ENCODE measurements at regions of chr17 and their contacts with region 1.

Region 1: DNA sequence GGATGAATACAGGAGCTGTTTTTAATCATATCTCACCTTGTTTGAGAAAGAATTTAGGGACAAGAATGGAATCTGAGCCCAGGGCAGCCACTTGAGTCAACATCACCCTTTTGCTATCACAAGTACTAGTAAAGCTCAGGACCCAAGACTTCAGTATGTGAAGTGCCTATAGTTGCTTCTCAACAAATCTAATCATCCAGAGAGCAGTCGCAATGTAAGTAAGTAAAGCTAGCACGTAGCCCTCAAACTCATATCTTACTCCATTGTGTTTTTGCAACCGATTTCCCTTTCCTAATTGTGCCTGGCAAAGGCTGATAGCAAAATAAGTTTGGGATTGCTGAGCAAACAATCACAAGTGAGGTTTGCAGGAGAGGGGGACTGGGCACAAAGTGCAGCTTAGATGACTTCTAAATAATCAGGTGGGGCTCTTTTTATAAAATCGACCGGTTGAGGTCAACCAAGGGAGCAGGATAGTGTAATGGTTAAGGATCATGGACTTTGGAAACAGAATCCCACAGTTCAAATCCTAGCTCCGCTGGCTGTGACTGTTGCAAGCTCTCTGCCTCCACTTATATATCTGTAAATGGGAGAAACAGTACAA is 13.0 kb downstream of the TOB1 start:
- DNase-seq: no peak
- ATAC-seq: no peak
- H3K4me3 ChIP-seq: no peak overlapping the region
- H3K27ac ChIP-seq: peak overlapping the region in 1 of 2 experiments; percentile 80; a peak in 2 of 6 replicates
- H3K4me1 ChIP-seq: peaks cover 25% of the 10 kb centered on the region
- CTCF ChIP-seq: no peak
- EP300 ChIP-seq: no peak
- POLR2A ChIP-seq: no peak
- RAD21 ChIP-seq: no peak

Region 2: DNA sequence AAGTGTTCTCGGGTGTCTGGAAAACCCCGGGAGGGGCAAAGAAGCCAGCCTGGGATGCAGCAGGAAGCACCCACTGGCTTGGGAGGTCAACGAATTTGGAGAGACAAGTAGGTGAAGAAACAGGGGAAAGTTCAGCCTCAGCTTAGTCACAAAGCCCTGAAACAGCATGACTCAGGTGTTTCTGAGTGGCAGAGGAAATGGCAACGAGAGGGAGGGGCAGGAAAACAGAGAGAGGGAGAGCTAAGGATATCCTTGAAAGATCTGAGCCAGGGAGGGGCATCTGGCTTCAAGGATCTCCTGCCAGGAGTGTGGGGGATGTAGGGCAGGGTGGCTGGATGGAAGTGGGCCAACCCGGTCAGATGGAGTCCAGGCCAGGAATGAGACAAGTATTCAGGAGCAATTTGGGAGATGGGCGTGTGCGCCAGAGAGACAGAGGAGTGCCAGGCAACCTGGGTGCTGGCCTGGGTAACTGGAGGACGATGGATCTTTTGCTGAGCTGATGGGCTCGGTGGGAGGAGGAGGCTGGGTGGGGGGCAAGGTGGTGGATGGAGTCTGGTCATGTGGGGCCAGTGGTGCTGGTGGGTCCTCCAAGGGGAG is 191.2 kb before region 1 on chr17:
- CTCF ChIA-PET with region 1: no interaction called
- POLR2A ChIA-PET with region 1: no interaction called
- DNase-seq: peak; percentile 100
- ATAC-seq: peak; percentile 61 to 75
- H3K4me3 ChIP-seq: 0 out of 3 replicates have a peak overlapping the region, but pooled peaks have one; percentile 8
- H3K27ac ChIP-seq: peak overlapping the region; percentile 98
- H3K4me1 ChIP-seq: peaks cover 97% of the 10 kb centered on the region
- CTCF ChIP-seq: no peak
- EP300 ChIP-seq: peak; percentile 96 to 98
- POLR2A ChIP-seq: no peak
- RAD21 ChIP-seq: peak; percentile 21 to 65; a peak in 4 of 5 replicates

Region 3: GRCh38 chr17:50816771-50817751 is 36.1 kb before region 1 on chr17:
- CTCF ChIA-PET with region 1: interaction called, 162 read pairs
- POLR2A ChIA-PET with region 1: no interaction called
- DNase-seq: peak; percentile 43 to 75
- ATAC-seq: peak; percentile 80 to 87
- H3K4me3 ChIP-seq: no peak overlapping the region
- H3K27ac ChIP-seq: peak overlapping the region in 1 of 2 experiments; percentile 7; a peak in 1 of 6 replicates
- H3K4me1 ChIP-seq: peaks cover 8% of the 10 kb centered on the region
- CTCF ChIP-seq: peak; percentile 91
- EP300 ChIP-seq: no peak
- POLR2A ChIP-seq: no peak
- RAD21 ChIP-seq: peak; percentile 49 to 52

Region 4: GRCh38 chr17:50865984-50866774 is 13.1 kb after region 1 on chr17 and contains the start of gene TOB1:
- CTCF ChIA-PET with region 1: interaction called, 197 read pairs
- POLR2A ChIA-PET with region 1: interaction called, 58 read pairs
- DNase-seq: peak; percentile 90 to 98
- ATAC-seq: peak; percentile 72 to 86
- H3K4me3 ChIP-seq: peak within 1 kb of the TSS; percentile 92
- H3K27ac ChIP-seq: peak within 1 kb of the TSS; percentile 97 to 98
- H3K4me1 ChIP-seq: peaks cover 36% of the 10 kb centered on the region
- CTCF ChIP-seq: no peak
- EP300 ChIP-seq: 0 out of 5 replicates have a peak, but pooled peaks of 1 of the 2 experiments have one; percentile 36
- POLR2A ChIP-seq: peak; percentile 100
- RAD21 ChIP-seq: peak; percentile 7 to 8; a peak in 3 of 5 replicates
- polyA plus RNA-seq, gene TOB1: 101 and 133 TPM in 2 replicates

Region 5: DNA sequence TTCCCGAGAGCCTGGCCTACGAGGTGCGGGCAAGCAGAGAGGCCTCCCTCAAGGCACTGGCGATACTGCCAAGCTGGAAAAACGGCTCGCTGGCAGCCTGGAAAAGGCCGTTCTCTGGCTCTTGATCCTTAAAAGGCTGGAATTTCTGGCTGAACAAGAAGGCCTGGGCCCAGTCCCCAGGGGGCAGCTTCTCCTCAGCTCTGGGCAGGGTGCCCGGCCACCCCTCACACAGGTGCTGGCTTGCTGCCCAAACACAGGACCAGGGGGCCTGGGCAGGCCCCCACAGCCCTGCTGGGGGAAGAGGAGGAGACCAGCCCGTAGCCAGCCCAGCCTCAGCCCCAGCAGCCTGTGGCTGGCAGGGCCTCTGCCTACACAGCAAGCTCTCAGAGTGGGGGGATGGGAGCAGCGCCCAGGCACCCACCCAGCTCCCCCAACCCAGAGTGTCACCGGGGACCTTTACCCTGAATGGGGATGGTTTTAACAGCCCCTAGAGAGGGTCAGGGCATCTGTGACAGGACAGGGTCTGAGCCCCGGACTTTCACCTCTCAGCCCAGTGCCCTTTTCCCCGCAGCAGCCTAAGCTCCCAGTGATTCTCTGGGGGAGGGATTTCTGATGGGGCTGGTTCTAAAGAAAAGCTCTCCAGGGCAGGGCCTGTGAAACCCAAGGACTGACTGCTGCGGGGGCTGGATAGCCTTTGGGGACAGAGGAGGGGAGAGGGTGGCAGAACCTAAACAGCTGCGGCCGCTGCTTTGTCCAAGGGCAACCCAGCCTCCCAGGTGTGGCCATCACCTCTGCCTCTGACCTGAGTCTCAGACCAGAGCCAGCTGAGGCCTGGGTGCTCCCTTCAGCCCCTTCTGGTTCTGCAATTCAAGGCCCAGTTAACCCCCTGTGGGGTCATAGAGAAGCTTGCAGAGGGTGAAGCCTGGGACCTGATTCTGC is 51.7 kb after region 1 on chr17:
- CTCF ChIA-PET with region 1: interaction called, 12 read pairs
- POLR2A ChIA-PET with region 1: no interaction called
- DNase-seq: no peak
- ATAC-seq: peak; percentile 33 to 58; a peak in 5 of 6 replicates
- H3K4me3 ChIP-seq: no peak overlapping the region
- H3K27ac ChIP-seq: peak overlapping the region; percentile 67 to 88
- H3K4me1 ChIP-seq: peaks cover 33% of the 10 kb centered on the region
- CTCF ChIP-seq: no peak
- EP300 ChIP-seq: no peak
- POLR2A ChIP-seq: no peak
- RAD21 ChIP-seq: no peak

Region 6: DNA sequence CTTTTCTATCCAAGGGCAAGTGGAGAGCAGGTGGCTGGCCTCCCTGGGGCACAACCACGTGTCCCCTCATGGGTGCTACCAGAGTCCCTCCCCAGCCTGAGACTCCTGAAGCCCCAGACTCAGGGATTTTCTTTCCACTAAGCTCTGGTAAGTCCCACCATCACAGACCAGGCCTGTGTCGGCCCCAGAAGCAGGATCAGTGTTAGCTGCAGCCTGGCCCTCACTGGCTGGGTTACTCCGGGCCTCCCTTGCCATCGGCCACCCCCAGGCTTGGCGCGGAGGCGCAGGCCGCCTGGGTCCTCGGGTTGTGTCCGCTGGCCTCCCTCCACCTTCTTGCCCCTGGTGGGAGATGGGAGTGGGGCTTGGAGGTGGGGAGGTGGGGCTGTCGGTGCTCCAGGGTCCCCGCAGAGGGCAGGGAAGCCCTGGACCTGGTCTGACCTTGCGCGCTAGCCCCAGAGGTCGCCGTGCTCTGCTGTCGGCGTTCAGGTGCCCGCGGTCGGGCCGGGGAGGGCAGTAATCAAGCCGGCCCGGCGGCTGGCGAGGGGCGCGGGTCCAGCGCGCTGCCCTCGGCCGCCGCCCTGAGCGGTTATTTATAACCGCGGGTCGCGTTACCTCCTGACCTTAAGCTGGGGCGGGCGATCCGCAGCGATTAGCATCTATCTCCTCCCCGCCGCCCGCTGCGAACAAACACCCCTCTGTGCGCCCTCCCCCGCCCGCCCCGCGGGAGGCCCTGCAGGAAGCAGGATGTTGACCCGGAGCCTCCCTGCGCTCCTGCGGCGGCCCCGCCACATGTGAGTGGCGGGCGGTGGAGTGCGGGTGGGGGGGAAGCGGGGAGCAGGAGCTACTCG is 91.2 kb after region 1 on chr17:
- CTCF ChIA-PET with region 1: interaction called, 1,502 read pairs
- POLR2A ChIA-PET with region 1: interaction called, 27 read pairs
- DNase-seq: peak; percentile 94 to 97
- ATAC-seq: peak; percentile 79 to 83
- H3K4me3 ChIP-seq: peak overlapping the region; percentile 53
- H3K27ac ChIP-seq: peak overlapping the region; percentile 96 to 98
- H3K4me1 ChIP-seq: peaks cover 78% of the 10 kb centered on the region
- CTCF ChIP-seq: no peak
- EP300 ChIP-seq: peak; percentile 88 to 97; a peak in 3 of 5 replicates
- POLR2A ChIP-seq: peak; percentile 98
- RAD21 ChIP-seq: peak in 1 of 2 experiments; percentile 55; a peak in 1 of 5 replicates

Region 7: GRCh38 chr17:50995645-50996044 is 142.5 kb after region 1 on chr17:
- CTCF ChIA-PET with region 1: interaction called, 15 read pairs
- POLR2A ChIA-PET with region 1: no interaction called
- DNase-seq: no peak
- ATAC-seq: peak in 1 of 2 experiments; percentile 41; a peak in 2 of 6 replicates
- H3K4me3 ChIP-seq: no peak overlapping the region
- H3K27ac ChIP-seq: no peak overlapping the region
- H3K4me1 ChIP-seq: no peaks in the 10 kb centered on the region
- CTCF ChIP-seq: no peak
- EP300 ChIP-seq: no peak
- POLR2A ChIP-seq: no peak
- RAD21 ChIP-seq: no peak

Region 8: DNA sequence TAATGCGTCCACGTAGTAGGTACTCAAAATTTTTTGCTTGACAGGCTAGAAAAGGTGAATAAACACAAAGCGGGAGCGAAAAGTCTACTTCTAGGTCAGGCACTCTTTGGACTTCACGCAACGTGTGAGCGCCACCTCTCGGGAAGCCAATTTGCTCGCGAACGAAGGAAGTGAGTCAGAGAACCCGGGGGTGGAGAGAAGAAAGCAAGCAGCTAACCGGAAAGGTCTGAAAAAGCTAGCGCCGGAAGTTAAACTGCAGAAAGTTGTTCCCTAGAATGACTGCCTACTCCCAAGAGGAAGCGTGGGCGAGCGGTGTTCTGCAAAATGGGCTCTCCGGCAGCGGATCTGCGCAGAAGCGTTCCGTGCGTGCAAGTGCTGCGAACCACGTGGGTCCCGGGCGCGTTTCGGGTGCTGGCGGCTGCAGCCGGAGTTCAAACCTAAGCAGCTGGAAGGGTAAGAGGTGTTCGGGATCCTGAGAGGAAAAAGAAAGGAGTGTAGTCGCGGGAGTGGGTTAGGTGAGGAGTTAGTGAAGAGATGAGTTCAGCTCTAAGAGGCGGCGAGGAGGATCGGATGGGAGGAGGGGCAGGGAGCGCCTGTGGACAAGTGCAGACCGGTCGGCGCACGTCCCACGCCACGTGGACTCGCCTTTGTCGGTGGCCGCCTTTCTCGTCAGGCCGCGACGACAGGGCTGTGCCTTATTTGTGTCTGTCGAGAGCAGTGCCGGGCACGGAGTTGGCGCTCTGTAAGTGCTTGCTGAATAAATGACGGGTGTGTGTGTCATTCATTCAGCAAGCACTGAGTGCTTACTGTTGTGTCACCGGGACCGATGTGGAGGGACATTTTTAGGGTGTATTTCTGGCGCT is 300.3 kb after region 1 on chr17 and contains the start of gene NME1:
- CTCF ChIA-PET with region 1: interaction called, 20 read pairs
- POLR2A ChIA-PET with region 1: no interaction called
- DNase-seq: peak; percentile 99 to 100
- ATAC-seq: peak; percentile 96 to 98
- H3K4me3 ChIP-seq: peak within 1 kb of the TSS; percentile 74
- H3K27ac ChIP-seq: peak within 1 kb of the TSS; percentile 82 to 88
- H3K4me1 ChIP-seq: peaks cover 25% of the 10 kb centered on the region
- CTCF ChIP-seq: peak; percentile 98
- EP300 ChIP-seq: no peak
- POLR2A ChIP-seq: peak; percentile 77
- RAD21 ChIP-seq: peak; percentile 99
- polyA plus RNA-seq, gene NME1: 639 and 782 TPM in 2 replicates

Region 9: DNA sequence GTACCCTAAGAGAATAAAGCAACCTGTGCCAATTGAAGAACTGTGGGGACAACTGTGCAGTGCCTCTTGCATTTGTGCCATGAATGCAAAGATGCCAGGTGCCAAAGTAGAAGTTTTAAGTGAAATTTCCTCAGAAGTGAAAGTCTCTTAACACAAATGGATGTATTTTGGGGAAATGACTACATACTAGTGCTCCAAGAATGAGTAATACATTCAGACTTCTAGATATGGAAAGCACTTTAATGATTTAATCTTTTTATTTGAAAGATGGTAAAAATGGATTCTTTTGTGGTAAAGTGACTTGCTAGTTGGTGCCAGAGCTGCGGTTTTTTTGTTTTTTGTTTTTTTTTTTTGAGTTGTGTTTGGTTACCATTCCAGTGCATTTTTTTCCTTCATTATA is 422.3 kb after region 1 on chr17:
- CTCF ChIA-PET with region 1: no interaction called
- POLR2A ChIA-PET with region 1: no interaction called
- DNase-seq: no peak
- ATAC-seq: no peak
- H3K4me3 ChIP-seq: no peak overlapping the region
- H3K27ac ChIP-seq: no peak overlapping the region
- H3K4me1 ChIP-seq: no peaks in the 10 kb centered on the region
- CTCF ChIP-seq: no peak
- EP300 ChIP-seq: no peak
- POLR2A ChIP-seq: no peak
- RAD21 ChIP-seq: no peak

Region 10: DNA sequence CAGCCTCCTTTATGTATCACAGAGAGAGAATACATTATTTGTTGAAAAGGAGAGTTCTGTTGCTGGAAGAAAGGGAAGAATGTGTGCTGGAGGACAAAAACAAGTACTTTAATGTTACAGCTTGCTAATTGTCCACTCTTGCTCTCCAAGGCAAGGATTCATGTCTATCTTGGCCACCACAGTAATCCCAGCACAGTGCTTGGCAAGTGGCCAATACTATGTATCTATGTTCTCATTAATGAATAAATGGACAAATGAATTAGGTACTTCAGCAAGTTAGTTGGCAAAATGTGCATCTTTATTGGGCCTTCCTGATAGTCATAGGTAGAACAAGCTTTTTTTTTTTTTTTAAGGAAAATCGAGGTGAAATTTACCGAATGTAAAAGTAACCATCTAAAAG is 524.9 kb after region 1 on chr17:
- CTCF ChIA-PET with region 1: no interaction called
- POLR2A ChIA-PET with region 1: no interaction called
- DNase-seq: no peak
- ATAC-seq: no peak
- H3K4me3 ChIP-seq: no peak overlapping the region
- H3K27ac ChIP-seq: no peak overlapping the region
- H3K4me1 ChIP-seq: no peaks in the 10 kb centered on the region
- CTCF ChIP-seq: no peak
- EP300 ChIP-seq: no peak
- POLR2A ChIP-seq: no peak
- RAD21 ChIP-seq: no peak

Region 11: DNA sequence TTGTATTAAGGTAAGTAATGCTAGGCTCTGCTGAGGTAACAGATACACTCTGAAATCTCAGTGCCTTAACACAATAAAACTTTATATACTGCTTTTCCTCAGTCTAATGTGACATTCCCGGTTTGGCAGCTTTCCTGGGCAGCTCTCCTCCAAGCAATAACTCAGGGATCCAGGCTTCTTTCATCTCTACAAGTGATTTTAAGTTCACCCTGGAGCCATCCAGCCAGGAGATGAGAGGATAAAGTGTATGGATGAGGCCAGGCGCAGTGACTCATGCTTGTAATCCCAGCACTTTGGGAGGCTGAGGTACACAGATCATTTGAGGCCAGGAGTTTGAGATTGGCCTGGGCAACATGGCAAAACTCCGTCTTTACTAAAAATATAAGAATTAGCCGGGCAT is 554.4 kb after region 1 on chr17:
- CTCF ChIA-PET with region 1: no interaction called
- POLR2A ChIA-PET with region 1: no interaction called
- DNase-seq: no peak
- ATAC-seq: no peak
- H3K4me3 ChIP-seq: no peak overlapping the region
- H3K27ac ChIP-seq: no peak overlapping the region
- H3K4me1 ChIP-seq: peaks cover 16% of the 10 kb centered on the region
- CTCF ChIP-seq: no peak
- EP300 ChIP-seq: no peak
- POLR2A ChIP-seq: no peak
- RAD21 ChIP-seq: no peak

Measured in A549 (cell line).